ENCODE measurements at regions of chr12 and their contacts with region 1.

Region 1: DNA sequence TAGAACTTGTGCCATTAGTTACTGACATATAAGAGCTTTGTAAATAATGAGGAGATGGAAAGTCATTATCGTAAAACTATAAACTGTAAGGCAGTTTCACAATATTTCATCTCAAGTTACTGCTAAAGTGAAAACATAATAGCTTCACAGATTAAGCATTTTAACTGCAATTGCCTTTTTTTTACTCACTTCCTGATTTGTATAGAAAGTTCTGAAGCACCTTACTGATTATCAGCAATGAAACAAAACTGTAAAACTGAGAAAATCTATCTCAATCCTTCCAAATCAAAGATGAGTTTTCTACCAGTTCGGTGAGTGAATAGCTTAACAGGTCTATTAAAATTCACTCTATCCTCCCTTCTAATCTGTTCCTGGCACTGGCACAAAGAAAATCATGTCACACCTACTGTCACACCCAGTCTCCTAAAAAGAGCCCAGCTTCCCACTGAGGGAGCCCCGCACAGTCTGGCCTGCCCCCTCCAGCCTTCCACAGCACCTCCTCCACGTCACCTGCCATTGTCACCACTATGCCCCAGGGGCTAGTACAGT is 161.4 kb upstream of the ABCD2 start:
- DNase-seq: no peak
- ATAC-seq: no peak
- H3K4me3 ChIP-seq: no peak overlapping the region
- H3K27ac ChIP-seq: no peak overlapping the region
- H3K4me1 ChIP-seq: no peaks in the 10 kb centered on the region
- H3K27me3 ChIP-seq: no peaks in the 10 kb centered on the region
- CTCF ChIP-seq: no peak
- POLR2A ChIP-seq: no peak
- RAD21 ChIP-seq: no peak

Region 2: GRCh38 chr12:39628836-39629235 is 152.2 kb before region 1 on chr12:
- CTCF ChIA-PET with region 1: no interaction called
- POLR2A ChIA-PET with region 1: no interaction called
- dilution Hi-C with region 1: no loop called
- in situ Hi-C with region 1: no loop called
- intact Hi-C with region 1: no loop called
- DNase-seq: no peak
- ATAC-seq: no peak
- H3K4me3 ChIP-seq: no peak overlapping the region
- H3K27ac ChIP-seq: no peak overlapping the region
- H3K4me1 ChIP-seq: no peaks in the 10 kb centered on the region
- H3K27me3 ChIP-seq: no peaks in the 10 kb centered on the region
- CTCF ChIP-seq: no peak
- POLR2A ChIP-seq: no peak
- RAD21 ChIP-seq: no peak

Region 3: GRCh38 chr12:39722504-39722903 is 58.5 kb before region 1 on chr12:
- CTCF ChIA-PET with region 1: no interaction called
- POLR2A ChIA-PET with region 1: no interaction called
- dilution Hi-C with region 1: no loop called
- in situ Hi-C with region 1: no loop called
- intact Hi-C with region 1: no loop called
- DNase-seq: no peak
- ATAC-seq: no peak
- H3K4me3 ChIP-seq: no peak overlapping the region
- H3K27ac ChIP-seq: no peak overlapping the region
- H3K4me1 ChIP-seq: no peaks in the 10 kb centered on the region
- H3K27me3 ChIP-seq: no peaks in the 10 kb centered on the region
- CTCF ChIP-seq: no peak
- POLR2A ChIP-seq: no peak
- RAD21 ChIP-seq: no peak

Region 4: DNA sequence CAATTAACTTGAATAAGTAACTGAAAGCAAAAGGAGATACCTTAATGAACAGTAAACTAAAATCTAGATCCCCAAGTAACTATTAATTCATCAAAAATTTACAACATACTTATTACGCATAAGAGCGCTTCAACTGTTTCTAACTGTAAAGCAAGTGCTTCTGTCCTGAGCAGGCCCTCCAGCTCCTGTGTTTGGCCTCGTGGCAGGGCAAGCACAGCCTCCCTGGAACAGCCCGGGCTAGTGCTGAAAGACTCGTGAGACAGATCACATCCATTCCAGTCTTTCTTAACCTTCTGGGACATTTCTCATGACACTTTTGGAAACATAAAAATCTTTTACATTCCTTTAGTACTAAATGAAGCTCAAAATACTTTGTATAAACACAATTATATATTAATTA is 17.4 kb after region 1 on chr12:
- CTCF ChIA-PET with region 1: no interaction called
- POLR2A ChIA-PET with region 1: interaction called, 11 read pairs
- dilution Hi-C with region 1: no loop called
- in situ Hi-C with region 1: no loop called
- intact Hi-C with region 1: no loop called
- DNase-seq: no peak
- ATAC-seq: no peak
- H3K4me3 ChIP-seq: no peak overlapping the region
- H3K27ac ChIP-seq: no peak overlapping the region
- H3K4me1 ChIP-seq: no peaks in the 10 kb centered on the region
- H3K27me3 ChIP-seq: no peaks in the 10 kb centered on the region
- CTCF ChIP-seq: no peak
- POLR2A ChIP-seq: no peak
- RAD21 ChIP-seq: no peak

Measured in IMR-90 (cell line).